Natural killer cell (primary cell): ENCODE measurements at regions of chr20 and their contacts with region 1.

Region 1: DNA sequence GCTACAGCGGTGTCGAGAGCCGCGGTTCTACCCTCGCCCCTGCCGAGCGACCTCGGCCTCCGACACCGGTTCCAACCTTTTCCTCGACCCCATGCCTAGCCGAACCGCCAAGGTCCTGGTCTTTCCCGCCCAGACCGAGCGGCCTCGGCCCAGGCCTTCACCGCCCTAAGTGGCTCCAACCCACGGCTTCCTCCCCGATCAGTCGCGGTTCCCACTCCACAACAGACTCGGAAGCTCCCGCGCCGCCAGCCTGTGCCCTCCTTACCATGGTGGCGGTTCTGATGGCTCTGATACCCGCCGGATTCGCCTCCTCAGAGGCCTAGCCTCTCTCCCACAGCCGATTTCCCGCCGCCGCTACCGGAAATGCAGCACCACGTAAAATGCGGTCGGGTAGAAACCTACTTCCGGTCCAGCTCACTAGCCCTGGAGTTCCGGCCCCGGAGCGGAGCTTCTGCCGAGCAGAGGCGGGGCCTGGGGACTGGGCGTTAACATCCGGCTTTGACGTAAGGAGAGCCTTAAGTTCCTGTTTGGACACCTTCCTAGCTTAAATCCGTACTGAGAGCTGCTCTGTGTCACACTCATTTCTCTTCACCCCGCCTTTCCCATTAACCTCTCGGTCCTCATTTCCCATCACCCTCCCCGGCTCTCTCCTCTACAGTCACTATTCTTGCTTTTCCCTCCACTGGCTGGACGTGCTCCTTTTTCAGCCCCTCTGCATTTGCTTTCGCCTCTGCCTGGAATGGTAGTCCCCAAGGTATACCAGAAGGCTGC is at the start of gene SNRPB:
- DNase-seq: peak; percentile 94 to 99
- ATAC-seq: peak; percentile 94 to 98 (median 95)
- H3K4me3 ChIP-seq: peak within 1 kb of the TSS; percentile 78
- H3K4me3 Mint-ChIP-seq: peak within 1 kb of the TSS; percentile 100
- H3K27ac ChIP-seq: peak within 1 kb of the TSS; percentile 97
- H3K27ac Mint-ChIP-seq: peak within 1 kb of the TSS; percentile 99 to 100
- H3K4me1 ChIP-seq: peaks cover 20% of the 10 kb centered on the region
- H3K4me1 Mint-ChIP-seq: peaks cover 43 to 50% of the 10 kb centered on the region in 2 donors
- H3K27me3 ChIP-seq: no peaks in the 10 kb centered on the region
- H3K27me3 Mint-ChIP-seq: no peaks in the 10 kb centered on the region
- CTCF ChIP-seq: no peak
- total RNA-seq, gene SNRPB: 160 to 174 (median 162) TPM

Region 2: DNA sequence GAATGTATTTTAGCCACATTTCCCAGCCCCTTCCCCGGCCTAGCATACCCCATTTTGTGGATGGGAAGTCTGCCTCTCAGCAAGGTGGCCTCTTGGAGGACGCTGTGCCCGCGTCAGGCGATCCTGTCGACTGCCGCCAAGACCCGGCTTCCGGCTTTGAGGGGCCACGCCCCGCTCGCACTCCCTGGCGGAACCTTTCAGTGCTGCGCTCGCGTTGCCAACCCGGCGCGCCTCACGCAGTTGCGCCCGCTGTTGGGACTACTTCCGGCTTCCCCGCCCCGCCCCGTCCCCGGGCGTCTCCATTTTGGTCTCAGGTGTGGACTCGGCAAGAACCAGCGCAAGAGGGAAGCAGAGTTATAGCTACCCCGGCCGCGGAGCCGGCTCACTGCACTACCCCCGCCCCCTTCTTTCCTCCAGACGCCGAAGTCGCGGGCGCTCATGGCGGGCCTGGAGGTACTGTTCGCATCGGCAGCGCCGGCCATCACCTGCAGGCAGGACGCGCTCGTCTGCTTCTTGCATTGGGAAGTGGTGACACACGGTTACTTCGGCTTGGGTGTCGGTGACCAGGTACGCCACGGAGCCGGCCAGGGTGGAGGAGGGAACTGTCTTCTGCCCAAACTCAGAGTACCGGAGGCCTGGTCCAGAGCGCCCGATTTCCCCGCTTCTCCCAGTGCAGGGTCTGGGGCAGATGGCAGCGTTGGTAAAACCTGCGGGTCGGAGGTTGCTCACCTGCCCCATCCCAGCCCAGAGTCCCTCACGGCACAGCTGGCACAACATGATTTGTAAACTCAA is 1352.1 kb before region 1 on chr20 and contains the start of gene PSMF1:
- intact Hi-C with region 1: loop called (anchors 10 kb)
- DNase-seq: peak; percentile 95 to 97
- ATAC-seq: peak; percentile 96 to 99 (median 97)
- H3K4me3 ChIP-seq: peak within 1 kb of the TSS; percentile 86
- H3K4me3 Mint-ChIP-seq: peak within 1 kb of the TSS; percentile 94
- H3K27ac ChIP-seq: peak within 1 kb of the TSS; percentile 74
- H3K27ac Mint-ChIP-seq: peak within 1 kb of the TSS; percentile 79 to 88
- H3K4me1 ChIP-seq: peaks cover 35% of the 10 kb centered on the region
- H3K4me1 Mint-ChIP-seq: peaks cover 54 to 56% of the 10 kb centered on the region in 2 donors
- H3K27me3 ChIP-seq: no peaks in the 10 kb centered on the region
- H3K27me3 Mint-ChIP-seq: no peaks in the 10 kb centered on the region
- CTCF ChIP-seq: peak; percentile 11
- total RNA-seq, gene PSMF1: 97.1 to 107 (median 101) TPM

Region 3: DNA sequence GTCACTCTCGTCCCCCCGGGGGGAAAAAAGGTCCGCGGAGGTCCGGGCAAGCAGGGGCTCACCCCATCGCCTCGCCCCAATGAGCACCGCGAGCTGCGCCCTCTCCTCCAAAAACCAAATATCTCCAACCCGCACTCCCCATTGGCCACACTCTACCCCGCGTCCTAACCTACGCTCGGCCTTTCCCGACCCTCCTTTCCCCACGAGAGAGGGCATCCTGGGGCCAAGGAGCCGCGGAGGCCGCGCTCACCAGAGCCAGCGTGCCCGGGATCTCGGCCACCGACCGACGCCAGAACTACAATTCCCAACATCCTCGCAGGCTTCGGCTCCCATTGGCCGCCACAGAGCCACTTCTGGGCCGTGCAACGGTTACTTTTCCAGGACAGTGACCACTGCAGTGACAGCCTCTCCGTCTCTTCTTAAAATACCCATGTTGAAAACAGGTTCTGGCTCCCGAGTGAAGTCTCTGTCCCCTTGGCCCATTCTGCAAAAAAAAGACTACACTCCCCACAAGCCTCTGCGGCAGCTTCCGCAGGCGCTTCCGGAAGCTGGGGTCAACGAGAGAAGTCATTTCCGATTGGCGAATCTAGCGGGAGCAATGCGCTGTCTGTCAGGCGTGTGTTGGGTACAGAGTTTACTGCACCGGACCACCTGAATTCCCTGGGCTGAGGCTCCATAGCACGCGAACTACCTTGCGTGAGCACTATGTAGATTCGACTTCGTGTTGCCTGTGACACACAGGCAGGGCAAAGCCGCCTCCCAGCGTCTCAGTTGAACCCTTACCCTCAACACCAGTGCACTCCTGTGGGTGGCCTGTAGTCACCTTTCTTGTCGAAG is 38.2 kb after region 1 on chr20 and contains the start of gene ZNF343:
- intact Hi-C with region 1: loop called (anchors 1 kb)
- DNase-seq: peak; percentile 74 to 89
- ATAC-seq: peak; percentile 94 to 96 (median 95)
- H3K4me3 ChIP-seq: peak within 1 kb of the TSS; percentile 66
- H3K4me3 Mint-ChIP-seq: peak within 1 kb of the TSS; percentile 100
- H3K27ac ChIP-seq: peak within 1 kb of the TSS; percentile 70
- H3K27ac Mint-ChIP-seq: peak within 1 kb of the TSS; percentile 88 to 89
- H3K4me1 ChIP-seq: peaks cover 14% of the 10 kb centered on the region
- H3K4me1 Mint-ChIP-seq: peaks cover 18 to 20% of the 10 kb centered on the region in 2 donors
- H3K27me3 ChIP-seq: no peaks in the 10 kb centered on the region
- H3K27me3 Mint-ChIP-seq: peaks cover 7 to 28% of the 10 kb centered on the region in 2 donors
- CTCF ChIP-seq: no peak
- total RNA-seq, gene ZNF343: 8.1 to 12.3 (median 8.6) TPM